Activated naive CD8-positive, alpha-beta T cell treated with anti-CD3 and anti-CD28 coated beads, Interleukin-2, amount 10 ng/mL, durations not matched to agents 7 days and 5 days (primary cell): ENCODE measurements at regions of chr14 and their contacts with region 1.

Region 1: DNA sequence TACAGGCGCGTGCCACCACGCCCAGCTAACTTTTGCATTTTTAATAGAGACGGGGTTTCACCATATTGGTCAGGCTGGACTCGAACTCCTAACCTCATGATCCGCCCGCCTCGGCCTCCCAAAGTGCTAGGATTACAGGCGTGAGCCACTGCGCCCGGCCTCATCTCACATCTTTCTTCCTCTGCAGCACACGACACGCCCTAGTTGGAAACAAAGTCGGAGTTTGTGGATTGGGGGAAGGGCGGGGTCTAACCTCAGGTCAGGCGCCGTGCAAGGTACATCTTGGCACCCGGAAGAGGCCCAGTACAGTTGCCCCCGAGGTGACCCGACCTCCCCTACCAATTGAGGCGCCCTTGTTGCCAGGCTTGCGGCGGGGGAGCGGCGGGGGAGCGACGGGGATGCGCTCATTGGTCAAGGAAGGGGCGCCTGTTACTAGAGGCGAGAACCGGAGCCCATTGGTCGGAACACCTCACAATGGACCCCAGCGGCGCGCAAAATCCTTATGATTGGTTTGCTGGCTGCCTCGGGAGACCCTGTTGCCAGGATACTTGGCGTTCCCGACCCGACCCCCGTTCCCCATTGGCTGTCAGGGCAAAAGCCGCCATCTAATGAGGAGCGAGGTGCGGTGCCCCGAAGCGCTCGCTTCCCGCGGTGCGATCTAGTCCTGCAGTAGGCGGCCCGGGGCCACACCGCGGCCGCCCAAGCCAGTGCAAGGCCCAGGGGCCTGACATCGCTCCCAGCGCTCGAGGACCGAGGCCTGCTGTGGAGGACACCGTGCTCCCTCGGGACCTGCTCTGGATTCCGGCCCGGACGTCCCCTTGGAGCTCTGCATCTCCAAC is at the start of gene REC8:
- DNase-seq: peak; percentile 78
- ATAC-seq: peak; percentile 86
- H3K4me3 Mint-ChIP-seq: peak within 1 kb of the TSS; percentile 93
- H3K27ac Mint-ChIP-seq: peak within 1 kb of the TSS; percentile 88
- H3K4me1 Mint-ChIP-seq: peaks cover 19% of the 10 kb centered on the region
- H3K27me3 Mint-ChIP-seq: no peaks in the 10 kb centered on the region
- total RNA-seq, gene REC8: 55.1 to 60.7 TPM

Region 2: DNA sequence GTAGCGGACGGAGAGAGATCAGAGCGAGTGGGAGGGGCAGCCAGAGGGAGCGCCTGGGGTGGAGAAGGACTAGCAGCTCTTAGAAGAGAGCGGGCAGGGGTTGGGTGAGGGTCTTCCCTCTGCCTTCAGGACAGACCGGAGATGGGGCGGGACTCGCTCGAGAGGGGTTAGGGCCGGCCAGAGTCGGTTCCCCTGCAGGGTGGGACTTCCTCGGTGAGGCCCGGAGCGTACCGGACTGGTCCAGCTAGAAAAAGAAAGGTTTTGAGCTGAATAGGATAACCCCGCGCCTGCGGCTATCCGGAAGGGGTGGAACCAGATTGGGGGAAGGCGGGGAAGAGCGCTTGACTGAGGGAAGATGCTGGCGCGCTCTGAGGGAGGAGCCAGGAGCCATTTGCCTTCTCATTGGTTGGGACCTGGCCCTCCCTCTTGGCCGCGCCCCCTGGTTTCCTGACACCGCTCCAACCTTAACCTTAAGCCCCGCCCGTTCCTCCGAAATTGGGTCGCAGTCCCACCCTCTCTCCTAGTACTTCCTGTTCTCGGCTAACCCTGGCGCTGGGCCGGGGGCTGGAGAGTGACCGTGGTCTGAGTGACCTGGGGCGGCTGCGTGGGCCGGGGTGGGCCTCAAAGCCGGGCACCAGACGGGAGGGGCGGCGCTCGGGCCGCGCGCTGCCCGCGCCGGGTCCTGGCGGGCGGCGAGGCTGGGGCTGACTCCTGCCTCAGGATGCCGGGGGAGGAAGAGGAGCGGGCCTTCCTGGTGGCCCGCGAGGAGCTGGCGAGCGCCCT is 24.5 kb before region 1 on chr14 and contains the start of gene RNF31:
- POLR2A ChIA-PET with region 1: interaction called, 11 read pairs
- DNase-seq: peak; percentile 95
- ATAC-seq: peak; percentile 82
- H3K4me3 Mint-ChIP-seq: peak within 1 kb of the TSS; percentile 94
- H3K27ac Mint-ChIP-seq: peak within 1 kb of the TSS; percentile 96
- H3K4me1 Mint-ChIP-seq: peaks cover 54% of the 10 kb centered on the region
- H3K27me3 Mint-ChIP-seq: no peaks in the 10 kb centered on the region
- total RNA-seq, gene RNF31: 131 to 153 TPM

Region 3: DNA sequence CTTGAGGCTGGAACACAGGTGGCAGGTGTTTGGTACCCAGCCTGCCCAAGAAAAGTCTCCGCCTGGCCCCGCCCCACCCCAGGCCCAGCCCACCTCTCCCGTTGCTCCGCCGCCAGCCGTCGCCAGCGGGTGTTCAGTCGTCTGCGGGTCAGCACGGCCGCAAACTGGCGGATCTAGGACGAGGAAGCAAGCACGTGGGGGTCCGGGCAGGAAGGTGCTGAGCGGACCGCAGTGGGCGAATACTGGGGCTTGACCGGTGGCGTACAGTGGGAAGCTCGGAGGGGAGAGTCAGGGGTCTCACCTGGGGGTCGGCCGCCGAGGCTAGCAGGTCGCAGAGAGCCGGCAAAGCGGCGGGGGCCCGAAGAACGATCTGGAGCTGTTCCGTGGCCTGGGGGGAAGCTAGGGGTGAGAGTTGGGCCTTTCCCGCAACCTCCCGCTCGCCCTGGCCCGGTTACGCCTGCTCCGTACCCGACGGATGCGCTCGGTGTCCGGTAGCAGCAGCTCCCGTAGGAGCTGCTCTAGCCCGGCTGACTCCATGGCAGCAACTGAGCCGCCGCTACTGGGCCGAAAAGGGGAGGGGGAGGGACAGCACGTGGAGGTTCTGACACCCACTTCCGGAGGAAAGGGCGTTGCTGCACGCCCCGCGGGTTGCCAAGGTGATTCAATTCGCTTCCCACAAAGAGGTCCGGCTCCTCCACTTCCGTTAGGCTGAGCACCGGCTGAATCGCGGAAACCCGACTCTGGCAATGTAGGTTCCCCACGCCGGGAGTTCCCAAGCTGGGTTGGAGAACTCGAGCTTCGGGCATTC is 16.8 kb after region 1 on chr14 and contains the start of gene IPO4:
- POLR2A ChIA-PET with region 1: interaction called, 14 read pairs
- DNase-seq: peak; percentile 87
- ATAC-seq: peak; percentile 85
- H3K4me3 Mint-ChIP-seq: peak within 1 kb of the TSS; percentile 85
- H3K27ac Mint-ChIP-seq: peak within 1 kb of the TSS; percentile 69
- H3K4me1 Mint-ChIP-seq: peaks cover 28% of the 10 kb centered on the region
- H3K27me3 Mint-ChIP-seq: no peaks in the 10 kb centered on the region
- total RNA-seq, gene IPO4: 32.2 to 33.0 TPM

Region 4: GRCh38 chr14:24231263-24232120 is 59.9 kb after region 1 on chr14:
- POLR2A ChIA-PET with region 1: no interaction called
- DNase-seq: no peak
- ATAC-seq: peak; percentile 40
- H3K4me3 Mint-ChIP-seq: peak overlapping the region; percentile 93
- H3K27ac Mint-ChIP-seq: peak overlapping the region; percentile 92
- H3K4me1 Mint-ChIP-seq: peaks cover 43% of the 10 kb centered on the region
- H3K27me3 Mint-ChIP-seq: no peaks in the 10 kb centered on the region